AG04449 (cell line): ENCODE measurements at regions of chr3 and their contacts with region 1.

Region 1: GRCh38 chr3:50611464-50612233 is at the start of gene CISH:
- DNase-seq: no peak
- H3K4me3 ChIP-seq: peak within 1 kb of the TSS; percentile 70
- CTCF ChIP-seq: peak; percentile 71

Region 2: GRCh38 chr3:50418850-50419249 is 192.8 kb before region 1 on chr3:
- CTCF ChIA-PET with region 1: no interaction called
- POLR2A ChIA-PET with region 1: no interaction called
- DNase-seq: no peak
- H3K4me3 ChIP-seq: no peak overlapping the region
- CTCF ChIP-seq: no peak

Region 3: GRCh38 chr3:50519471-50520089 is 92.1 kb before region 1 on chr3:
- CTCF ChIA-PET with region 1: interaction called, 43 read pairs
- POLR2A ChIA-PET with region 1: no interaction called
- DNase-seq: no peak
- H3K4me3 ChIP-seq: no peak overlapping the region
- CTCF ChIP-seq: peak; percentile 96

Region 4: GRCh38 chr3:50587806-50588758 is 23.6 kb before region 1 on chr3:
- CTCF ChIA-PET with region 1: interaction called, 819 read pairs
- POLR2A ChIA-PET with region 1: interaction called, 4 read pairs
- DNase-seq: no peak
- H3K4me3 ChIP-seq: no peak overlapping the region
- CTCF ChIP-seq: no peak

Region 5: DNA sequence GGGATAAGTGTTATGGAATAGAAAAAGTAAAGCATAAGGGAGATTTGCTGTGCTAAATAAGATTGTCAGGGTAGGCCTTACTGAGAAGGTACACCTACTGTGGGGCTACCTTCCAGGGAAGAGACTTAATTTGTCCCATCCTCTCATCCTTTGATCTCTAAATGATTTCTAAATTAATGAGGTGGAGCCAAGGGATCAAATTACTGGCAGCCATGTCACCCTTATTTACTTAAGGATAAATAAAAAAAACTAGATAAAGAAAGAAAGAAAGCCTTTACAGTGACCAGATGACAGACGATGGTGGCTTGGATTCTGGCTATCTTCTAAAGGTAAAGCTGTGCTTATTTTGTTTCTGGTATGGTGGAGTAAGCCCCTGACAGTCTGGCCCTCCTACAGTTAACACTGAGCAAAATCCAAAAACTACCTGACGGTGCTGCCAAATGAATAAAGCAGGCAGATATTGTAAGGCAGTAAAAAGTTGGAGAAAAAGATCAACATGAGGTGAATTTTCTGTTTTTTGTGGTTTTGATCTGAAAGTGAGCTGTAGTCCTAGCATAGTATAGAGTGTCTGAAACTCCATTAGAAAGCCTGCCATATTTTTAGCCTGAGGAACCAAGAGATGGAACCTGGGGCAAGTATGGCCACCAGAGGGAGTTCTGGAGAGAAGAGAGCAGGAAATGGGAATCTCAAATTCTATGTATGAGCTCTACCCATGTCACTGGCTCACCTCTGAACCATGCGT is 488.3 kb after region 1 on chr3:
- CTCF ChIA-PET with region 1: interaction called, 45 read pairs
- POLR2A ChIA-PET with region 1: no interaction called
- DNase-seq: peak; percentile 4
- H3K4me3 ChIP-seq: no peak overlapping the region
- CTCF ChIP-seq: peak; percentile 72

Region 6: DNA sequence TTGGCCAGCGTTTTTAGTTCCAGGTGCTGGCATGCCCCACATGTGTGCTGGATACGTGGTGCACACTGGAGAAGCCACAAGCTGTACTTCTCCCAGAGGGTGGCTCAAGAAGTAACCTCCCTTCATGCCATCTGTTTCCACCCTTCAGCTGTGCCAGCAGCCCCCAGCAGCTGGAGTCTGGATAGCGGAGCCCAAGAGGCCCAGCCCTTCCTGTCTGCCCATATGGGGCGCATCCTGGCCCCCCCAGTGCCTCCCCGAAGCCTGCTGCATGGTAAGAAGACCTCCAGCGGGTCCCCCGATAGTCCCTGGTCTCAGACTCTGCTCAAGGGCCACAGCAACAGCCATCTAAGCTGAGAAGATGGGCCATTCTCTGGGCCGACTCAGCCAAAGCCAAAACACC is 767.7 kb after region 1 on chr3:
- CTCF ChIA-PET with region 1: interaction called, 45 read pairs
- POLR2A ChIA-PET with region 1: no interaction called
- DNase-seq: no peak
- H3K4me3 ChIP-seq: no peak overlapping the region
- CTCF ChIP-seq: no peak

Region 7: DNA sequence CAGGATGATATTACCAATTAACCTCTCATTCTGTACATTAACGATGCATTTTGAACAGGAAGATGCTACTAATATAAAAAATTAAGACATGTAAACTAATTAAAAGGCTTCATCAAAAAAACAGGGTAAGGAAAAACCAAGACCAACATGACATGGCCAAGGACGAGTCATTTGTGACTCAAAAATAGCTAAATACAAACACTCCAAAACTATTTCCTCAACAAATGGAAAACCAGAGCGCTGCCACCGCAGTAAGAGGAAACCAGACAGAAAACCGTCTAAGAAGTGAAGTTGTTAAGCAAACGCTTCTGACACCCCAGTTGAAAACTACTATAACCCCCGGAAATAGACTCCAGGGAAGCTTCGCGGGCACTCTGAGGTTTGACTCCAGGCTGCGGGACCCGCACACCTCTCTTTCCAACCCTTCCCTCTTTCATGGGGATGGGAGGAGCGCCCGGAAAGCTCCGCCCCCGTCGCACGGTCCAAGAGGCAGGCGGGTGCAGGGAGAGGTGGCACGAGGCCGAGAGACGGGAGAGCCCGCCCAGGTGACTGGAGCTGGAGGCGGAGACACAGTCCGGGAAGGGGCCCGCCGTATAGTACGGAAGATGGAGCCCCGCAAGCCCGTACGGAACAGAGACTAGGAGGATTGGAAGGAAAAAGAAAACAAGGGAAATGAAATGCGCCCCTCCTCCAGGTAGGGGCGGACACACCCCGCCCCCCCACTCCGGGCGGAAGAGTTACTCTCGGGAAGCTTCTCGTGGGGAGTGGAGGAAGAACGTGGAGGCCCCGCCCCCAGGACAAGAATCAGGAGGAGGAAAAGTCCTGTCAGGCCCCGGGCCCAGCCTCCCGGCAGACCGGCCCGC is 887.5 kb after region 1 on chr3:
- CTCF ChIA-PET with region 1: interaction called, 13 read pairs
- POLR2A ChIA-PET with region 1: no interaction called
- DNase-seq: peak; percentile 49
- H3K4me3 ChIP-seq: peak overlapping the region; percentile 80
- CTCF ChIP-seq: no peak